ENCODE measurements at regions of chr9 and their contacts with region 1.

Region 1: GRCh38 chr9:87640385-87640795 is 85.5 kb upstream of the CTSL start:
- DNase-seq: no peak
- ATAC-seq: peak; percentile 57
- H3K4me3 ChIP-seq: no peak overlapping the region
- H3K27ac ChIP-seq: no peak overlapping the region
- H3K4me1 ChIP-seq: peaks cover 26% of the 10 kb centered on the region
- H3K27me3 ChIP-seq: no peaks in the 10 kb centered on the region
- CTCF ChIP-seq: no peak

Region 2: GRCh38 chr9:87497604-87498045 is 142.8 kb before region 1 on chr9 and contains the start of gene DAPK1:
- intact Hi-C with region 1: loop called (anchors 10 kb)
- DNase-seq: peak; percentile 92
- ATAC-seq: peak; percentile 87
- H3K4me3 ChIP-seq: peak within 1 kb of the TSS; percentile 80
- H3K27ac ChIP-seq: peak within 1 kb of the TSS; percentile 94
- H3K4me1 ChIP-seq: peaks cover 28% of the 10 kb centered on the region
- H3K27me3 ChIP-seq: no peaks in the 10 kb centered on the region
- CTCF ChIP-seq: peak; percentile 41
- total RNA-seq, gene DAPK1: 168 TPM